ENCODE measurements at regions of chr17 and their contacts with region 1.

Region 1: DNA sequence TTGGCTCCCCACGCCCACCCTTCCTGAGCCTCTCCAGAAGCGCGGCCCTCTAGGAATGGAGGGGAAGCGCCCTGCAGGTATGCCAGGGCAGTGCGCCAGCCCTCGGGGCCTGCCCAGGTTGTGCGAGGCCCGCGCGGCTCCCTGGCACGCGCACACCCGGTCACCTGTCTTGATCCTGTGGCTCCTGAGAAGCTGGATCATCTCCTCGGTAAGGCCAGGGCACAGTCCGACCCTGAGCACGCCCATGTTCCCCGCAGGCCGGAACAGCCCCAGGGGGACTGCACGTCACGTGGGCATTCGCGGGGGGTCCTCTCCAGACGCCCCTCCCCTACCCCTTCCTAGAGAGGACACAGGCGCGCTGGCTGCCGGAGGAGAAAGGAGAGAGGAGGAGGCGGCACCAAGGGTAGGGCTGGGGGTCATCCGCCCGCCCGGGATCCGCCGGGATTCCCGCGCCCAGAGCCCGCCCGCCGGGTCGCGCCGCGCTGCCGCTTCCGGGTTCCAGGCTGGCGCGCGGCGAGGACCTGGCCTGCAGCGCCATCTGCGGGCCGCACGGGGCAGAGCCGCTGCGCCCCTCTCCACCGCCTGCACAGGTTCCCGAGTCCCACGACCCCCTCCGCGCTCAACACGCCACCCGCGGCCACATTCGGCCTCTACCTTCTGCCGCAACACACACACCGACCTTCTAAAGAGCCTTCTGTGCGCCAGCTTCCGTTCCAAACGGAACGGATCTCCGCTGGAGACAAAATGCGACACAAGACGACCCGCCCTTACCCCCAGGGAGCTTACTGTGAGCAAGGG is at the start of gene RAD51D:
- DNase-seq: peak; percentile 56
- ATAC-seq: peak; percentile 94
- H3K4me3 ChIP-seq: peak within 1 kb of the TSS; percentile 61
- H3K27ac ChIP-seq: peak within 1 kb of the TSS; percentile 66
- H3K4me1 ChIP-seq: peaks cover 6% of the 10 kb centered on the region
- H3K27me3 ChIP-seq: no peaks in the 10 kb centered on the region
- CTCF ChIP-seq: peak; percentile 97
- POLR2A ChIP-seq: 0 out of 2 replicates have a peak, but pooled peaks have one; percentile 31
- RAD21 ChIP-seq: peak; percentile 93
- total RNA-seq, gene RAD51D: 9.7 and 12.7 TPM in 2 replicates

Region 2: DNA sequence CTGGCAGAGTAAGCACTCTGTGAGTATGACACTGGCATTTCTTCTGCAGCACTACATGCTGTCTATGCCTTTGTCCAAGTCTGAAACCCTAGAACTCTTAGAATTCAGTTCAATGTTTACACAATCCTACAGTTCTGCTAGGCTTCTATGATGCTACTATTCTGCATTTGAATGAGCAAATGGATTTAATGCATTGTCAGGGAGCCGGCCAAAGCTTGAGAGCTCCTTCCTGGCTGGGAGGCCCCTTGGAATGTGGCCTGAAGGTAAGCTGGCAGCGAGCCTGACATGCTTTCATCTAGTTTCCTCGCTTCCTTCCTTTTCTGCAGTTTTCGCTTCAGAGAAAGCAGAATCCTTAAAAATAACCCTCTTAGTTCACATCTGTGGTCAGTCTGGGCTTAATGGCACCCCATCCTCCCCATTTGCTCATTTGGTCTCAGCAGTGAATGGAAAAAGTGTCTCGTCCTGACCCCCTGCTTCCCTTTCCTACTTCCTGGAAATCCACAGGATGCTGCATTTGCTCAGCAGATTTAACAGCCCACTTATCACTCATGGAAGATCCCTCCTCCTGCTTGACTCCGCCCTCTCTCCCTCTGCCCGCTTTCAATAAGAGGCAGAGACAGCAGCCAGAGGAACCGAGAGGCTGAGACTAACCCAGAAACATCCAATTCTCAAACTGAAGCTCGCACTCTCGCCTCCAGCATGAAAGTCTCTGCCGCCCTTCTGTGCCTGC is 864.8 kb before region 1 on chr17 and contains the start of gene CCL2:
- CTCF ChIA-PET with region 1: no interaction called
- POLR2A ChIA-PET with region 1: no interaction called
- dilution Hi-C with region 1: no loop called
- in situ Hi-C with region 1: loop called (anchors 25 kb)
- intact Hi-C with region 1: no loop called
- DNase-seq: peak; percentile 85
- ATAC-seq: peak; percentile 69
- H3K4me3 ChIP-seq: peak within 1 kb of the TSS; percentile 47
- H3K27ac ChIP-seq: peak within 1 kb of the TSS; percentile 89
- H3K4me1 ChIP-seq: peaks cover 38% of the 10 kb centered on the region
- H3K27me3 ChIP-seq: no peaks in the 10 kb centered on the region
- CTCF ChIP-seq: no peak
- POLR2A ChIP-seq: peak; percentile 37; the same call in 1 of the 2 replicates
- RAD21 ChIP-seq: no peak
- total RNA-seq, gene CCL2: 126 and 206 TPM in 2 replicates

Region 3: DNA sequence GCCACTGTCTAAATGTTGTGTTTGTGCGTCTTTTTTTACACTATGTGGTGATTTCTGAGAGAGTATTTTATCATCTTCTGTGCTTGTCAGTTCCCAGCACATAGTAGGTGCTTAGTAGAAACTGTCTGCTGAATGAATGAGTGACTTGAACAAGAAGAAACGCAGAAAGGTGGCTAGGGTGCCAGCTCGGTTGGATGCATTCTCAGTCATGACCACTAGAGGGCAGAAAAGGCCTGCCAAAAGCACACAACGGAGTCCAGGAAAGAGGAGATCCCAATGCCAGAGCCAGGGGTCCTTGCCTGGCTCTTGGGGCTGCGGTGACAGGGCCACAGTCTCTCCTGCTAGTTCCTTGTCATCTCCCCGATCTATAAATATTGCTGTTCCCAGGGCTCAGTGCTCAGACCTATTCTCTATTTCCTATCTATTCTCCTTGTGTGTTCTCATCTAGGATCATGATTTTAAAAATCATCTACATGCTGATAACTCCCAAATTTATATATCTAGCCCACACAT is 699.3 kb before region 1 on chr17:
- CTCF ChIA-PET with region 1: interaction called, 7 read pairs
- POLR2A ChIA-PET with region 1: no interaction called
- dilution Hi-C with region 1: no loop called
- in situ Hi-C with region 1: loop called (anchors 10 kb)
- intact Hi-C with region 1: loop called (anchors 1 kb)
- DNase-seq: peak; percentile 46
- ATAC-seq: peak; percentile 95
- H3K4me3 ChIP-seq: no peak overlapping the region
- H3K27ac ChIP-seq: no peak overlapping the region
- H3K4me1 ChIP-seq: no peaks in the 10 kb centered on the region
- H3K27me3 ChIP-seq: peaks cover 27% of the 10 kb centered on the region
- CTCF ChIP-seq: peak; percentile 85
- POLR2A ChIP-seq: no peak
- RAD21 ChIP-seq: peak; percentile 91

Region 4: GRCh38 chr17:34542700-34543336 is 576.7 kb before region 1 on chr17:
- CTCF ChIA-PET with region 1: interaction called, 5 read pairs
- POLR2A ChIA-PET with region 1: no interaction called
- dilution Hi-C with region 1: no loop called
- in situ Hi-C with region 1: loop called (anchors 10 kb)
- intact Hi-C with region 1: no loop called
- DNase-seq: no peak
- ATAC-seq: peak; percentile 46; the same call in 1 of the 2 replicates
- H3K4me3 ChIP-seq: no peak overlapping the region
- H3K27ac ChIP-seq: no peak overlapping the region
- H3K4me1 ChIP-seq: no peaks in the 10 kb centered on the region
- H3K27me3 ChIP-seq: peaks cover 1% of the 10 kb centered on the region; the same call in 1 of the 2 replicates
- CTCF ChIP-seq: peak; percentile 67
- POLR2A ChIP-seq: no peak
- RAD21 ChIP-seq: peak; percentile 69

Region 5: DNA sequence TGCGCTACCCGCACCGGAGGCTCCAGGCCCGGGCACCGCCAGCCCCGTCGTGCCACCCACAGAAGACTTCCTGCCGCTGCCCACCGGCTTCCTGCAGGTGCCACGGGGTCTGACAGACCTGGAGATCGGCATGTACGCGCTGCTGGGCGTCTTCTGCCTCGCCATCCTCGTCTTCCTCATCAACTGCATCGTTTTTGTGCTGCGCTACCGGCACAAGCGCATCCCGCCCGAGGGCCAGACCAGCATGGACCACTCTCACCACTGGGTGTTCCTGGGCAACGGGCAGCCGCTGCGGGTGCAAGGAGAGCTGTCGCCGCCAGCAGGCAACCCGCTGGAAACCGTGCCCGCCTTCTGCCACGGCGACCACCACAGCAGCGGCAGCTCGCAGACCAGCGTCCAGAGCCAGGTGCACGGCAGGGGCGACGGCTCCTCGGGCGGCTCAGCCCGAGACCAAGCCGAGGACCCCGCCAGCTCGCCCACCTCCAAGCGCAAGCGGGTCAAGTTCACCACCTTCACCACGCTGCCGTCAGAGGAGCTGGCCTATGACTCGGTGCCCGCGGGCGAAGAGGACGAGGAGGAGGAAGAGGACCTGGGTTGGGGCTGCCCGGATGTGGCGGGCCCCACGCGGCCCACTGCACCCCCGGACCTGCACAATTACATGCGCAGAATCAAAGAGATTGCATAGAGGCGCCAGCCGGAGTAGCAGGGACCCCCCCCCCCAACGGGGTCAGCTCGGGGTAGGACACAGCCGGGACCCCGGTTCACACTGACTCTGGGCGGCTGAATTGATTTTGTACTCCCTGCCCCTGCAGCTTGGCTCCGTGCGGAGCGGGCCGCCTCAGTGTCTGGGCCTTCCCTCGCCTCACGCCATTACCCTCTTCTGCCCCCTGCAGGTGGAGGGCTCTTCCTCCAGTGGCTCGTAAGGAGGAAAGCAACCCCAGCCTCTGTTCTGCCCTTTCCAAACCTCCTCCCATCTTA is 481.7 kb before region 1 on chr17:
- CTCF ChIA-PET with region 1: no interaction called
- POLR2A ChIA-PET with region 1: no interaction called
- dilution Hi-C with region 1: no loop called
- in situ Hi-C with region 1: loop called (anchors 25 kb)
- intact Hi-C with region 1: no loop called
- DNase-seq: peak; percentile 56
- ATAC-seq: peak; percentile 99
- H3K4me3 ChIP-seq: no peak overlapping the region
- H3K27ac ChIP-seq: no peak overlapping the region
- H3K4me1 ChIP-seq: no peaks in the 10 kb centered on the region
- H3K27me3 ChIP-seq: peaks cover 11% of the 10 kb centered on the region; the same call in 1 of the 2 replicates
- CTCF ChIP-seq: peak; percentile 80
- POLR2A ChIP-seq: no peak
- RAD21 ChIP-seq: peak; percentile 54

Region 6: DNA sequence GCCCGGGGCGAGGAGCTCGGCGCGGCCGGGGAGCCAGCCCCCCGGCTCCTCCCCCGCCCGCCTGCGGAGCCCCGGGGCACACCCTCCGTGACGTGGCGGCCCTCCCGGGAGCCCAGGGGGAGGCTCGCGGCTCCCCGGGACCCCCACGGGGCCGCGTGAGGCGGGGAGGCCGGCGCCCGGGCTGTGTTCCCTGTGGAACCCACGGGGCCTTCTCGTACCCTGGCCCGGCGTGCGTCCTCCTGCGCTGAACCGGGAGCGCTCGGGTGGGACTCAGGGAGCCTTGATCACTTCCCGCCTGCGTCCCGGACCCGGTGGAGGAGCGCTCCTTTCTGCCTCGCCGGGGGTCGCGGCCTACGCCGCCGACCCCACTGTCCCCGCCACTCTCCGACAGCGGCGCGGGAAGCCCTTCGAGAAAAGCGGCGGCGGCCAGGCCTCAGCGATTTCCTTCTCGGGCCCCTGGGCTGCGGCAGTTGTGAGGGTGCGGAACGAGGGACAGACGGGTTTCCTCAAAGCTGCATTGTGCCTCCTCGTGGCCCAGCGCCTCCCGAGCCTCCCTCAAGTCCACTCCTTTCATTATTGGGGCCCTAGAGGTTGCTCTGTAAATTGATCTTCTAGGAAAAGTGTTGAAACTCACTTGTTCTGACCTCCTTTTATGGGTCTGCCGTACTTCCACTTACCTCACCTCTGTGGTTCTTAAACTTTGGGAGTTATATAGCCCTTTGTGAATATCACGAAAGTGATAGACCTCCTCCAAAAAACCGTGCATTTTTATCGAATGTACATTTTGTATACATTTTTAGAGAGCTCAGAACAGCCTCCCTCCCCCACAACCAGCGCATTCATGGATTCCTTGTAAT is 138.7 kb before region 1 on chr17:
- CTCF ChIA-PET with region 1: no interaction called
- POLR2A ChIA-PET with region 1: no interaction called
- dilution Hi-C with region 1: no loop called
- in situ Hi-C with region 1: no loop called
- intact Hi-C with region 1: loop called (anchors 5 kb)
- DNase-seq: peak; percentile 80
- ATAC-seq: peak; percentile 94
- H3K4me3 ChIP-seq: peak overlapping the region; percentile 91
- H3K27ac ChIP-seq: peak overlapping the region; percentile 96
- H3K4me1 ChIP-seq: peaks cover 7% of the 10 kb centered on the region
- H3K27me3 ChIP-seq: no peaks in the 10 kb centered on the region
- CTCF ChIP-seq: peak; percentile 50
- POLR2A ChIP-seq: peak; percentile 77
- RAD21 ChIP-seq: peak; percentile 36

Region 7: DNA sequence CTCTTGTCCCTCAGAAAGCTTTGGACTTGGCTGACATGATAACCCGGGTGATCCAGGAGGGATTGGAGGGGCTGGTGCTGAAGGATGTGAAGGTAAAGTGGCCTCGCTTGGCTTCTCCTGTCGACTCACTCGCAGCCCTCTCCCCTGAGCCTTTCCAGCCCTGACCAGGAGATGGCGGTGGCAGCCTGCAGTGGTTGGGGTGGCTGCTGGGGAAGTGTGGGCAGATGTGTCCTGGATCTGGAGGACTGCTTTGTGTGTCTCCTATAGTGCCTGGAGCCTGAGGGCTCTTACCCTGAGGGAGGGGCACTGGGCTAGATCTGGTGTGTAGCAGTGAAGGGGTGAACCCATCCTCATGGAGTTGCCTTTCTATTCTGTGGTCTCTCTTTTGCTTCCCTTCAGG is 121.4 kb before region 1 on chr17:
- CTCF ChIA-PET with region 1: no interaction called
- POLR2A ChIA-PET with region 1: interaction called, 3 read pairs
- dilution Hi-C with region 1: no loop called
- in situ Hi-C with region 1: no loop called
- intact Hi-C with region 1: loop called (anchors 1 kb)
- DNase-seq: peak; percentile 70
- ATAC-seq: peak; percentile 84
- H3K4me3 ChIP-seq: no peak overlapping the region
- H3K27ac ChIP-seq: peak overlapping the region; percentile 77
- H3K4me1 ChIP-seq: peaks cover 22% of the 10 kb centered on the region
- H3K27me3 ChIP-seq: no peaks in the 10 kb centered on the region
- CTCF ChIP-seq: peak; percentile 89
- POLR2A ChIP-seq: no peak
- RAD21 ChIP-seq: peak; percentile 94

Measured in IMR-90 (cell line).